Activated CD8-positive, alpha-beta T cell treated with anti-CD3 and anti-CD28 coated beads, Interleukin-2, amount 10 ng/mL, durations not matched to agents 7 days and 5 days (primary cell): ENCODE measurements at regions of chr1 and their contacts with region 1.

Region 1: GRCh38 chr1:157090196-157090647 is 9.4 kb downstream of the ETV3L start:
- DNase-seq: peak; percentile 89
- ATAC-seq: peak; percentile 94
- H3K4me3 Mint-ChIP-seq: no peak overlapping the region
- H3K27ac Mint-ChIP-seq: no peak overlapping the region
- H3K4me1 Mint-ChIP-seq: no peaks in the 10 kb centered on the region
- H3K27me3 Mint-ChIP-seq: no peaks in the 10 kb centered on the region

Region 2: GRCh38 chr1:157073944-157074767 is 16.1 kb before region 1 on chr1:
- CTCF ChIA-PET with region 1: interaction called, 28 read pairs
- POLR2A ChIA-PET with region 1: no interaction called
- DNase-seq: peak; percentile 60
- ATAC-seq: peak; percentile 47
- H3K4me3 Mint-ChIP-seq: no peak overlapping the region
- H3K27ac Mint-ChIP-seq: no peak overlapping the region
- H3K4me1 Mint-ChIP-seq: peaks cover 2% of the 10 kb centered on the region
- H3K27me3 Mint-ChIP-seq: peaks cover 28% of the 10 kb centered on the region

Region 3: GRCh38 chr1:157117527-157118057 is 27.4 kb after region 1 on chr1:
- CTCF ChIA-PET with region 1: interaction called, 18 read pairs
- POLR2A ChIA-PET with region 1: no interaction called
- DNase-seq: no peak
- ATAC-seq: no peak
- H3K4me3 Mint-ChIP-seq: no peak overlapping the region
- H3K27ac Mint-ChIP-seq: peak overlapping the region; percentile 35
- H3K4me1 Mint-ChIP-seq: peaks cover 9% of the 10 kb centered on the region
- H3K27me3 Mint-ChIP-seq: peaks cover 4% of the 10 kb centered on the region

Region 4: GRCh38 chr1:157156058-157156541 is 65.9 kb after region 1 on chr1:
- CTCF ChIA-PET with region 1: interaction called, 470 read pairs
- POLR2A ChIA-PET with region 1: interaction called, 18 read pairs
- DNase-seq: peak; percentile 84
- ATAC-seq: peak; percentile 87
- H3K4me3 Mint-ChIP-seq: peak overlapping the region; percentile 12
- H3K27ac Mint-ChIP-seq: peak overlapping the region; percentile 67
- H3K4me1 Mint-ChIP-seq: peaks cover 27% of the 10 kb centered on the region
- H3K27me3 Mint-ChIP-seq: peaks cover 21% of the 10 kb centered on the region

Region 5: DNA sequence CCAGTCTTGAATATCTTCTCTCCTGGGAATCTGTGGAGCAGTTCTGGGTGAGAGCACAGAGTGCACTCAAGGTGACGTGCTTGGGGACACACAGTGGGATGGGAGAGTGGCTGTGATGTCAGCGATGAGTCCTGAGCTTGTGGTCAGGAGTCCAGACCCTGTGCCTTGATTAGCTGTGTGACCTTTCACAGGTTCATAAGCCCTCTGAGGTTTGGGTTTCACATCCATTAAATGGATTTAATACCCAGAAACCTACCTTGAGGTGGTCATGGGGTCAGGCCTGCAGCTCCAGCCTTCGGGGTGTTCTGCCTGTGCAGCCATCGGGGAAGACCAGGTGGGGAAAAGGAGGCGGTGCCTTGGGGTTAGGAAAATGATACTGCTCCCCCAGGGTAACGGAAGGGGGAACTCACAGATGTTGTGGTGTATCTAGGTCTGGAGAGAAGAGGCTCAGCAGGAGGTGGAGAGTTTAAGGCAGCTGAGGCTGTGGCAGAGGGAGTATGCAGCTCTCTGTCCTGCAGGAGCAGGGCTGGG is 86.4 kb after region 1 on chr1:
- CTCF ChIA-PET with region 1: interaction called, 12 read pairs
- POLR2A ChIA-PET with region 1: no interaction called
- DNase-seq: no peak
- ATAC-seq: no peak
- H3K4me3 Mint-ChIP-seq: no peak overlapping the region
- H3K27ac Mint-ChIP-seq: no peak overlapping the region
- H3K4me1 Mint-ChIP-seq: peaks cover 2% of the 10 kb centered on the region
- H3K27me3 Mint-ChIP-seq: peaks cover 33% of the 10 kb centered on the region